ENCODE measurements at regions of chr12 and their contacts with region 1.

Region 1: DNA sequence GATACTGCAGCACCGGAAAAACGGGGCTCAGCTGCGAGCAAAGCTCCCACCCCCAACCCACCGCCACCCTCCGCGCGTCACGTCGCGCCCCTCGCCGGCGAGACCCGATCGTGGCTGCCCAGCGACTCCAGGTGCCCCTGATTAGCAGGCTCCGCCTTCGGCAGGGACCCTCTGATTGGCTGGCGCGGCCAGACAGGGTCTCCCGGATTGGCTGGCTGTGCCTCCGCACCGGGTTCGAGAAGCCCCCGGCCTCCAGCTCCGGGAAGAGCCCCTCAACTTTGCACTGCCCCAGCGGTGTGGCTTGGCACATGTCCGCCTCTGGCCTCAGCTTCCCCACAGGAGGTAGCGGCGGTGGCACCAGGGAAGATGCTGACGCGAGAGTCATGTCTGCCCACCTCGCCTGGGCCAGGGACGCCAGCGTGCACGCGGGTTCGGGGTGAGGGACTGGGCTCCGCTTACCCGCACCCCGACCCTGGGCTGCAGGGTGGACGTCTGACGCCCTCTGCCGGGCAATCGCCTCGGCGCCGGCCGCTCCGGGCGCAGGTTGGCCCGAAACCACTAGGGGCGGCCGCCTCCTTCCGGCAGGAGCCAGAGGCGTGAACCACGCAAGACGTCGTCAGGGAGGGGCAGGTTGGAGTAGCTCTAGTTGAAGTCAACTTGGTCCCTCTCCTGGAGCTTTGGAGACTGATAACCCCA is 498 bp upstream of the RHOF start:
- DNase-seq: peak; percentile 92
- H3K4me3 Mint-ChIP-seq: peak overlapping the region; percentile 69
- H3K27ac Mint-ChIP-seq: peak overlapping the region; percentile 90
- H3K4me1 Mint-ChIP-seq: peaks cover 58% of the 10 kb centered on the region
- H3K27me3 Mint-ChIP-seq: no peaks in the 10 kb centered on the region
- CTCF ChIP-seq: peak; percentile 100

Region 2: DNA sequence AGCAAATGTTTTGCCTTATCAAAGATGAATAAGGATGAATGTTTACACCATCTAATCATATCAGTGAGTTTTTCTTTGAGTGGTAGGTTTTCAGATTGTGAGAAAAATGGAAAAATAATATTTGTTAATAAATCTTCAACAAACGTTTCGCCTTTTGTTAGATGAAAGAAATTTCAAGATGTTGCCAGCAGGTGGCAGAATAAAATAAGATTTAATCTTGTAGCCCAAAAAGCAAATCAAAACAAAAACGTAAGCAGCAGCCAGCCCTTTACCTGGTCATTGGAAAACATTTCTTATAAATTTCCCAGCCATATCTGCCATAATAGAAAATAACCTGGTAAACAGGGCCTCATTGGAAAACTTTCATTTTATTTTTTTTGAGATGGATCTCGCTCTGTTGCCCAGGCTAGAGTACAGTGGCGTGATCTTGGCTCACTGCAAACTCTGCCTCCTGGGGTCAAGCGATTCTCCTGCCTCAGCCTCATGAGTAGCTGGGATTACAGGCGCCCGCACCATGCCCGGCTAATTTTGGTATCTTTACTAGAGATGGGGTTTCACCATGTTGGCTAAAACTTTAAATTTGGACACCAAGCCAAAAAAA is 96.8 kb before region 1 on chr12:
- CTCF ChIA-PET with region 1: interaction called, 110 read pairs
- POLR2A ChIA-PET with region 1: interaction called, 6 read pairs
- intact Hi-C with region 1: loop called (anchors 1 kb)
- DNase-seq: peak; percentile 61
- H3K4me3 Mint-ChIP-seq: no peak overlapping the region
- H3K27ac Mint-ChIP-seq: no peak overlapping the region
- H3K4me1 Mint-ChIP-seq: no peaks in the 10 kb centered on the region
- H3K27me3 Mint-ChIP-seq: no peaks in the 10 kb centered on the region
- CTCF ChIP-seq: peak; percentile 54

Region 3: DNA sequence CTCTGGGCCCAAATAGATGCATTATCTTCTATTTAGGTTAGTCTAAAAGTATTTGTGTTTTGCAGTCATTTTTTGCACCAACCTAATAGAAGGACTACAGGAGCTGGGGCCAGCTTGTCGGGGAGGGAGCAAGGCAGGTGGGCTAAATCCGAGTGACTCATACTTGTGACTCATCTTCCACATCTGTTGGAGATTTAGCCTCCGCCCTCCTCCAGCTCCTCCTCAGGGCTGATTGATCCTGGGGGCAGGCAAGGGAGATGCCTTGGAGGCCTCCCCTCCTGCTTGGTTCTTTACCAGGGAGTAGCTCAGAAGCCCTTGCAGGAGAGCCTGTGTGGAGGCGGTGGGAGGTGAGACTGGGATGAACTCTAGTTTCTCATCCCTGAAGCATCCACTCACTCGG is 28.4 kb before region 1 on chr12:
- CTCF ChIA-PET with region 1: interaction called, 18 read pairs
- POLR2A ChIA-PET with region 1: no interaction called
- intact Hi-C with region 1: no loop called
- DNase-seq: peak; percentile 67
- H3K4me3 Mint-ChIP-seq: no peak overlapping the region
- H3K27ac Mint-ChIP-seq: no peak overlapping the region
- H3K4me1 Mint-ChIP-seq: no peaks in the 10 kb centered on the region
- H3K27me3 Mint-ChIP-seq: no peaks in the 10 kb centered on the region
- CTCF ChIP-seq: no peak

Region 4: GRCh38 chr12:121839106-121839992 is 45.4 kb after region 1 on chr12:
- CTCF ChIA-PET with region 1: interaction called, 29 read pairs
- POLR2A ChIA-PET with region 1: interaction called, 4 read pairs
- intact Hi-C with region 1: no loop called
- DNase-seq: peak; percentile 98
- H3K4me3 Mint-ChIP-seq: peak overlapping the region; percentile 93
- H3K27ac Mint-ChIP-seq: peak overlapping the region; percentile 46
- H3K4me1 Mint-ChIP-seq: peaks cover 13% of the 10 kb centered on the region
- H3K27me3 Mint-ChIP-seq: no peaks in the 10 kb centered on the region
- CTCF ChIP-seq: no peak

Region 5: GRCh38 chr12:121893961-121894460 is 100.0 kb after region 1 on chr12:
- CTCF ChIA-PET with region 1: interaction called, 55 read pairs
- POLR2A ChIA-PET with region 1: interaction called, 128 read pairs
- intact Hi-C with region 1: no loop called
- DNase-seq: peak; percentile 81
- H3K4me3 Mint-ChIP-seq: peak overlapping the region; percentile 59
- H3K27ac Mint-ChIP-seq: peak overlapping the region; percentile 97
- H3K4me1 Mint-ChIP-seq: peaks cover 28% of the 10 kb centered on the region
- H3K27me3 Mint-ChIP-seq: no peaks in the 10 kb centered on the region
- CTCF ChIP-seq: no peak

Measured in MCF 10A (cell line).